ENCODE measurements at regions of chr18 and their contacts with region 1.

Region 1: DNA sequence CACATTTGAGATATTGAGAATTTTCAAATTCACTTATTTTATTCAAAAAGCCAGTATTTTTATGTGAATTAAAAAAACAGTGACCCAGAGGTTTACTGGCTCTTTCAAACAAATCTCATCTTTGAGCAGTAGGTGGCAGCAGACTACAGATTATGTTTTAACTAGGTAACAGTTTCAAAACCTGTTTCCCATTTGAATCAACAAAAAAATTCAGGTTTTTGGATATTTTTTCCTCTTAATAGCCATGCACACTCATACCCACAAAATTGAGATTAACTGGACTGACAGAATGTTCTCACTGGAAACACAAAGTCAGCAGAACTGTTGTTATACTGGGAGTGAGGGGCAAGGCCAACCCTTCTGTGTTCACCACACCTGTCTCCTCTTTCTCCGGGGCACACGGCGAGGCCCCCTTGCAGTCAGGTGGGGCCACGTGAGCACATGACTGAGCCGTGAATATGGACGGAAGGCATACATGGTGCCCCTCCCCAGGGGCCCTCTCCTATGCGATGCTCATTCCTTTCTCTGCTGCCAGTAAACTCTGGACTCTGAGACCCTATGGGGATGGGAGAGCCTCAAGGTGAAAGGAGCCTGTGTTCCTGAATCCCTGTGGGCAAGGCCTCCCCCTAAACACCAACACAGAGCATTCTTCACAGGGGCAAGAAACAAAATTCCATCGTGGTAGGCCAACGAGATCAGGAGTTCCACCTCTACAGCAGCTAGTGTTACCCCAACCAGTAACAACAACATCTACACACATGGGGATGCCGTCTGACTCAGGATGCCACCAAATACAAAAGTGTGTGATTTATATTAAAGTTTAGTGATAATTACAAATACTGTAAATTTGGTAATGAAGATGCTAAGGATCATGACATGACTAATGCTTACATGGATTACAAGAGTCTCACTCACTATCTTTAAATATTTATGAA is 80.4 kb downstream of the LPIN2 start:
- DNase-seq: no peak
- ATAC-seq: peak; percentile 66 to 69
- H3K4me3 ChIP-seq: no peak overlapping the region
- H3K27ac ChIP-seq: no peak overlapping the region
- H3K4me1 ChIP-seq: no peaks in the 10 kb centered on the region
- H3K27me3 ChIP-seq: no peaks in the 10 kb centered on the region
- CTCF ChIP-seq: peak; percentile 76

Region 2: GRCh38 chr18:2874765-2875164 is 57.7 kb before region 1 on chr18:
- intact Hi-C with region 1: no loop called
- DNase-seq: no peak
- ATAC-seq: no peak
- H3K4me3 ChIP-seq: no peak overlapping the region
- H3K27ac ChIP-seq: no peak overlapping the region
- H3K4me1 ChIP-seq: no peaks in the 10 kb centered on the region
- H3K27me3 ChIP-seq: no peaks in the 10 kb centered on the region
- CTCF ChIP-seq: no peak

Region 3: GRCh38 chr18:3148930-3149535 is 216.5 kb after region 1 on chr18:
- intact Hi-C with region 1: loop called (anchors 10 kb)
- DNase-seq: no peak
- ATAC-seq: no peak
- H3K4me3 ChIP-seq: no peak overlapping the region
- H3K27ac ChIP-seq: no peak overlapping the region
- H3K4me1 ChIP-seq: peaks cover 3% of the 10 kb centered on the region
- H3K27me3 ChIP-seq: no peaks in the 10 kb centered on the region
- CTCF ChIP-seq: no peak

Region 4: DNA sequence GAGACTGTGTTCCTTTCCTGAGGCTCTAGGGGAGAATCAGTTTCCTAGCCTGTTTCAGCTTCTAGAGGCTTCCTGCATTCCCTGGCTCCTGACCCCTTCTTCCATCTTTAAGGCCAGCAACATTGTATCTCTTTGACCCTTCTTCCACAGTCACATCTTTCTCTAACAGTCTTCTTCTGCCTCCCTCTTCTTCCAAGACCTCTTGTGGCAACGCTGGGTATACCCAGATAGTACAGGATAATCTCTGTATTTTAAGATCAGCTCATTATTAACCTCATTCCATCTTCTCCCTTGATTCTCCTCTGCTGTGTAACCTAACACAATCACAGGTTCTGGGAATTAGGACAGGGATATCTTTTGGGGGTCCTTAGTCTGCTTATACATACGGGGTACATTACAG is 306.2 kb after region 1 on chr18:
- intact Hi-C with region 1: loop called (anchors 5 kb)
- DNase-seq: no peak
- ATAC-seq: no peak
- H3K4me3 ChIP-seq: no peak overlapping the region
- H3K27ac ChIP-seq: no peak overlapping the region
- H3K4me1 ChIP-seq: no peaks in the 10 kb centered on the region
- H3K27me3 ChIP-seq: no peaks in the 10 kb centered on the region
- CTCF ChIP-seq: no peak